Mammary epithelial cell (primary cell): ENCODE measurements at regions of chr18 and their contacts with region 1.

Region 1: GRCh38 chr18:22643731-22644130 is 226.0 kb upstream of the CTAGE1 start:
- DNase-seq: no peak
- H3K4me3 ChIP-seq: no peak overlapping the region
- H3K27ac ChIP-seq: no peak overlapping the region
- H3K4me1 ChIP-seq: no peaks in the 10 kb centered on the region
- H3K27me3 ChIP-seq: peaks cover 2% of the 10 kb centered on the region
- CTCF ChIP-seq: no peak

Region 2: DNA sequence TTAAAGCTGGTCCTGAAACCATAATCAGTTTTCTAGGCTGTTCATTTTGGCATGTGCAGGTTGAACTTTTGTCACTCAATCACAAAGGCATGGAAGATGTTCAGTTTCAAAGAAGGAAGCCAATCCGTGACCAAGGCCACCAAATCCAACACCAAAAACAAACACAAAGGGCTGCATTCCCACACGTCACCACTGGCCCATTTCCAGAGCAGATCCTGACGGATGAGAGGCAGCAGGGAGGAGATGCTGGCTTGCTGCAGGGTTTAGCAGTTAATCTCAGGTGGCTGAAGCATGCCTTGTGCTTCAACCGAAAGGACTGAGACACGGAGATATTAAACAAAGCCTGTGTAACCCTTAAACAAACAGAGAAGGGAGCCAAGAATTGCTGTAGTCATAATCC is 34.1 kb before region 1 on chr18:
- CTCF ChIA-PET with region 1: no interaction called
- dilution Hi-C with region 1: loop called (anchors 5 kb)
- in situ Hi-C with region 1: no loop called
- intact Hi-C with region 1: no loop called
- DNase-seq: peak; percentile 7
- H3K4me3 ChIP-seq: no peak overlapping the region
- H3K27ac ChIP-seq: no peak overlapping the region
- H3K4me1 ChIP-seq: peaks cover 13% of the 10 kb centered on the region
- H3K27me3 ChIP-seq: no peaks in the 10 kb centered on the region
- CTCF ChIP-seq: no peak